H1 (cell line): ENCODE measurements at regions of chr2 and their contacts with region 1.

Region 1: GRCh38 chr2:24597181-24597870 is 106.3 kb downstream of the NCOA1 start:
- DNase-seq: no peak
- H3K4me3 ChIP-seq: no peak overlapping the region
- H3K27ac ChIP-seq: no peak overlapping the region
- H3K4me1 ChIP-seq: peaks cover 0 to 4% (median under 1%) of the 10 kb centered on the region in 4 experiments; a peak in 3 of 7 replicates
- H3K27me3 ChIP-seq: no peaks in the 10 kb centered on the region
- CTCF ChIP-seq: no peak
- EP300 ChIP-seq: no peak
- POLR2A ChIP-seq: no peak
- RAD21 ChIP-seq: no peak

Region 2: DNA sequence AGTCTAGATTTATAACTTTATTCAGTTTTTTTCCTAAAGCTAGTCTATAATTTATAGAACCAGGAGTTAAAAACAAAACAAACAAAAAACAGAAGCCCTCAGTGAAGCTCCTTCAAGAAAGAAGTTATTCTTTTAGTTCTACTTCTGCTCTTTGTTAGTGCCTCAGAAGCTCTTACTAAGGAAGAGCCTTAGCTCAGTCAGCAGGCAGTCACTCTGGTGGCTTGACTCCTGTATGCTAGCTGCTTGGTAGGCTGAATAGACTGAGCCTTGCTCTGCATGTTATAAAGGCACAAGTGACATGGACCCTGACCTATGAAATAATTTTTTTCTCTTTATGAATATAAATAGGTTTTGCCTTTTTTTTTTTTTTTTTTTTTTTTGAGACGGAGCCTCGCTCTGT is 81.5 kb before region 1 on chr2:
- CTCF ChIA-PET with region 1: no interaction called
- POLR2A ChIA-PET with region 1: no interaction called
- DNase-seq: no peak
- H3K4me3 ChIP-seq: no peak overlapping the region
- H3K27ac ChIP-seq: no peak overlapping the region
- H3K4me1 ChIP-seq: no peaks in the 10 kb centered on the region
- H3K27me3 ChIP-seq: no peaks in the 10 kb centered on the region
- CTCF ChIP-seq: no peak
- EP300 ChIP-seq: no peak
- POLR2A ChIP-seq: no peak
- RAD21 ChIP-seq: no peak

Region 3: GRCh38 chr2:24559475-24560109 is 37.7 kb before region 1 on chr2:
- CTCF ChIA-PET with region 1: no interaction called
- POLR2A ChIA-PET with region 1: no interaction called
- DNase-seq: no peak
- H3K4me3 ChIP-seq: no peak overlapping the region
- H3K27ac ChIP-seq: no peak overlapping the region
- H3K4me1 ChIP-seq: peaks cover 0 to under 1% (median 0%) of the 10 kb centered on the region in 4 experiments; a peak in 2 of 7 replicates
- H3K27me3 ChIP-seq: no peaks in the 10 kb centered on the region
- CTCF ChIP-seq: no peak
- EP300 ChIP-seq: no peak
- POLR2A ChIP-seq: no peak
- RAD21 ChIP-seq: no peak

Region 4: DNA sequence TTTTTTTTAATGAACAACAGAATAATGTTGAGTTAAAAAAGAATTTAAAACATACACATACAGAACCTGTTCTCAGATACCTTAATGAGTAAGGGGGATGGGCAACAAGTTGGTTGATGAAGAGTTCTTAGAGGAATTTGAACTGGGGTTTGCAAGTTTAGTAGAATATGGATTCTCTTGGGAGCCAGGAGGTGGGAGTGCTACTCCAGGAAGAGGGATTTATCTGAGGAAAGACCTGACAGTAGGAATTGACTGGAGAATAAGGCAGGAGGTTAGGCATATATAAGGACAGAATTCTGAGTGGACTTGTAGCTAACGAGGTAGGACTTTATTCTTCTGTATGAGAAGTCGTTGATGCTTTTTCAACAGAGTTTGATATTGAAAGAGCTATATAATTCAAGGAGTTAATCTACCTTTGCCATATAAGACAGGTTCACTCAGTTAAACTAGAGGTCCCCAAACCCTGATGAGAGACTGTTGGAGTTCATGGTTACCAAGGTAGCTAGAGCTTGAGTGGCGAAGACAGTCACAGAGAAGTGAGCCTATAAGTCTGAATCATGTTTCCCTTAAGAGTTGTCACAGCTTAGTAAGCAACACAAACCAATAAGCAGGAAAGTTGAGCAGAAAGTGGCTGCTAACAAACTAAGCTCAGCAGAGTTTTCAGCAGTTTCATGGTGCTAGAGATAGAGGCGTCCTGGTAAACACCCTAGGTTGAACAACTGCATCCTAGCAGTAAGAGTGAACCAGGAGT is 18.1 kb before region 1 on chr2:
- CTCF ChIA-PET with region 1: interaction called, 10 read pairs
- POLR2A ChIA-PET with region 1: no interaction called
- DNase-seq: no peak
- H3K4me3 ChIP-seq: no peak overlapping the region
- H3K27ac ChIP-seq: no peak overlapping the region
- H3K4me1 ChIP-seq: peaks cover 0 to 8% (median 0%) of the 10 kb centered on the region in 4 experiments; a peak in 2 of 7 replicates
- H3K27me3 ChIP-seq: no peaks in the 10 kb centered on the region
- CTCF ChIP-seq: peak in 1 of 3 experiments; percentile 10; a peak in 1 of 4 replicates
- EP300 ChIP-seq: no peak
- POLR2A ChIP-seq: no peak
- RAD21 ChIP-seq: peak; percentile 58 to 68

Region 5: DNA sequence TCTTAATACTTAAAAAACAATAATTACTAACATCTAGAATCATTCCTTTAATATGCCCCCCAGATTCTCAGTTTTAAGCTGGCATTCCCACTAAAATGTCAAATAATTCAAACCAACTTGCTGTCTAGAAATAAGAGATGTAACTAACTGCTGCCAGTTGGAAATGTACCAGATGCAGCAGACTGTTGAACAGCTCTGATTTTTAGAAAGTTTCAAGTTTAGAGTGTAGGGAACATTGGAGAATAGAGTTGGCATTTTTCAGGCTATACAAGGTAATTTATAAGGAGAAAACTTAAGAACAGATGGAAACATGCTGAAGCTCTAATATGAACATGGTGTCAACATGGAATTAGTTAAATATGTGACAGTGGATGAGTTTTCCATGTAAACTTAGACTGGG is 94.5 kb after region 1 on chr2:
- CTCF ChIA-PET with region 1: no interaction called
- POLR2A ChIA-PET with region 1: no interaction called
- DNase-seq: no peak
- H3K4me3 ChIP-seq: no peak overlapping the region
- H3K27ac ChIP-seq: no peak overlapping the region
- H3K4me1 ChIP-seq: no peaks in the 10 kb centered on the region
- H3K27me3 ChIP-seq: no peaks in the 10 kb centered on the region
- CTCF ChIP-seq: no peak
- EP300 ChIP-seq: no peak
- POLR2A ChIP-seq: no peak
- RAD21 ChIP-seq: no peak

Region 6: GRCh38 chr2:24930768-24931167 is 333.4 kb after region 1 on chr2:
- CTCF ChIA-PET with region 1: no interaction called
- POLR2A ChIA-PET with region 1: no interaction called
- DNase-seq: no peak
- H3K4me3 ChIP-seq: no peak overlapping the region
- H3K27ac ChIP-seq: no peak overlapping the region
- H3K4me1 ChIP-seq: peaks cover 0 to 10% (median 4%) of the 10 kb centered on the region in 4 experiments; a peak in 5 of 7 replicates
- H3K27me3 ChIP-seq: peaks cover 0 to 3% (median 0%) of the 10 kb centered on the region in 4 experiments; a peak in 3 of 7 replicates
- CTCF ChIP-seq: no peak
- EP300 ChIP-seq: no peak
- POLR2A ChIP-seq: no peak
- RAD21 ChIP-seq: no peak